Mammary epithelial cell (primary cell): ENCODE measurements at regions of chr21 and their contacts with region 1.

Region 1: GRCh38 chr21:20720623-20721022 is 277.6 kb upstream of the NCAM2 start:
- DNase-seq: no peak
- H3K4me3 ChIP-seq: no peak overlapping the region
- H3K27ac ChIP-seq: no peak overlapping the region
- H3K4me1 ChIP-seq: no peaks in the 10 kb centered on the region
- H3K27me3 ChIP-seq: no peaks in the 10 kb centered on the region
- CTCF ChIP-seq: no peak

Region 2: GRCh38 chr21:20760221-20760620 is 39.6 kb after region 1 on chr21:
- CTCF ChIA-PET with region 1: no interaction called
- dilution Hi-C with region 1: loop called (anchors 5 kb)
- in situ Hi-C with region 1: no loop called
- intact Hi-C with region 1: no loop called
- DNase-seq: no peak
- H3K4me3 ChIP-seq: no peak overlapping the region
- H3K27ac ChIP-seq: no peak overlapping the region
- H3K4me1 ChIP-seq: no peaks in the 10 kb centered on the region
- H3K27me3 ChIP-seq: no peaks in the 10 kb centered on the region
- CTCF ChIP-seq: no peak

Region 3: GRCh38 chr21:20800106-20800505 is 79.5 kb after region 1 on chr21:
- CTCF ChIA-PET with region 1: no interaction called
- dilution Hi-C with region 1: no loop called
- in situ Hi-C with region 1: no loop called
- intact Hi-C with region 1: no loop called
- DNase-seq: no peak
- H3K4me3 ChIP-seq: no peak overlapping the region
- H3K27ac ChIP-seq: no peak overlapping the region
- H3K4me1 ChIP-seq: no peaks in the 10 kb centered on the region
- H3K27me3 ChIP-seq: no peaks in the 10 kb centered on the region
- CTCF ChIP-seq: no peak